Naive thymus-derived CD4-positive, alpha-beta T cell (primary cell): ENCODE measurements at regions of chr12 and their contacts with region 1.

Region 1: GRCh38 chr12:120292661-120293531 is at the start of gene RNU4-1:
- DNase-seq: peak; percentile 51 to 93 (median 89)
- ATAC-seq: peak; percentile 58
- H3K4me3 ChIP-seq: peak within 1 kb of the TSS; percentile 64
- H3K4me3 Mint-ChIP-seq: no peak within 1 kb of the TSS
- H3K27ac ChIP-seq: peak within 1 kb of the TSS; percentile 100
- H3K27ac Mint-ChIP-seq: peak within 1 kb of the TSS in 1 of 9 donors; percentile 62
- H3K4me1 ChIP-seq: no peaks in the 10 kb centered on the region
- H3K4me1 Mint-ChIP-seq: peaks cover 0 to 9% (median 4%) of the 10 kb centered on the region in 7 donors
- H3K27me3 ChIP-seq: no peaks in the 10 kb centered on the region
- H3K27me3 Mint-ChIP-seq: peaks cover 0 to 14% (median 0%) of the 10 kb centered on the region in 5 donors
- total RNA-seq, gene RNU4-1: 319 to 3,107 (median 1,510) TPM

Region 2: GRCh38 chr12:119988782-119989668 is 303.9 kb before region 1 on chr12 and contains the start of gene BICDL1:
- CTCF ChIA-PET with region 1: no interaction called
- POLR2A ChIA-PET with region 1: interaction called, 4 read pairs
- intact Hi-C with region 1: loop called in 1 of 2 experiments (anchors 1 kb)
- DNase-seq: peak; percentile 95 to 99 (median 98)
- ATAC-seq: peak; percentile 93
- H3K4me3 ChIP-seq: peak within 1 kb of the TSS; percentile 68
- H3K4me3 Mint-ChIP-seq: peak within 1 kb of the TSS; percentile 78 to 95 (median 87)
- H3K27ac ChIP-seq: peak within 1 kb of the TSS; percentile 90
- H3K27ac Mint-ChIP-seq: peak within 1 kb of the TSS; percentile 69 to 98 (median 93)
- H3K4me1 ChIP-seq: peaks cover 18 to 19% of the 10 kb centered on the region in 2 donors
- H3K4me1 Mint-ChIP-seq: peaks cover 18 to 46% (median 38%) of the 10 kb centered on the region in 7 donors
- H3K27me3 ChIP-seq: no peaks in the 10 kb centered on the region
- H3K27me3 Mint-ChIP-seq: peaks cover 0 to 9% (median 0%) of the 10 kb centered on the region in 5 donors
- total RNA-seq, gene BICDL1: 75.8 to 156 (median 143) TPM

Region 3: GRCh38 chr12:120194534-120195395 is 98.1 kb before region 1 on chr12 and contains the start of gene GCN1:
- CTCF ChIA-PET with region 1: no interaction called
- POLR2A ChIA-PET with region 1: interaction called, 182 read pairs
- intact Hi-C with region 1: no loop called
- DNase-seq: peak; percentile 77 to 97 (median 89)
- ATAC-seq: peak; percentile 93
- H3K4me3 ChIP-seq: peak within 1 kb of the TSS; percentile 96
- H3K4me3 Mint-ChIP-seq: peak within 1 kb of the TSS; percentile 82 to 96 (median 90)
- H3K27ac ChIP-seq: peak within 1 kb of the TSS; percentile 88
- H3K27ac Mint-ChIP-seq: peak within 1 kb of the TSS; percentile 87 to 95 (median 93)
- H3K4me1 ChIP-seq: peaks cover 20 to 26% of the 10 kb centered on the region in 2 donors
- H3K4me1 Mint-ChIP-seq: peaks cover 27 to 60% (median 44%) of the 10 kb centered on the region in 7 donors
- H3K27me3 ChIP-seq: no peaks in the 10 kb centered on the region
- H3K27me3 Mint-ChIP-seq: no peaks in the 10 kb centered on the region
- total RNA-seq, gene GCN1: 90.6 to 142 (median 132) TPM

Region 4: GRCh38 chr12:120234643-120235368 is 58.1 kb before region 1 on chr12:
- CTCF ChIA-PET with region 1: interaction called, 3 read pairs
- POLR2A ChIA-PET with region 1: interaction called, 156 read pairs
- intact Hi-C with region 1: no loop called
- DNase-seq: no peak
- ATAC-seq: peak; percentile 7
- H3K4me3 ChIP-seq: no peak overlapping the region
- H3K4me3 Mint-ChIP-seq: peak overlapping the region in 2 of 10 donors; percentile 37 to 65
- H3K27ac ChIP-seq: peak overlapping the region; percentile 41
- H3K27ac Mint-ChIP-seq: peak overlapping the region; percentile 4 to 98 (median 92)
- H3K4me1 ChIP-seq: peaks cover 57 to 73% of the 10 kb centered on the region in 2 donors
- H3K4me1 Mint-ChIP-seq: peaks cover 56 to 94% (median 82%) of the 10 kb centered on the region in 7 donors
- H3K27me3 ChIP-seq: no peaks in the 10 kb centered on the region
- H3K27me3 Mint-ChIP-seq: no peaks in the 10 kb centered on the region

Region 5: GRCh38 chr12:120257041-120257821 is 35.7 kb before region 1 on chr12:
- CTCF ChIA-PET with region 1: no interaction called
- POLR2A ChIA-PET with region 1: interaction called, 127 read pairs
- intact Hi-C with region 1: loop called (anchors 1 kb)
- DNase-seq: peak in 1 of 9 donors; percentile 41
- ATAC-seq: no peak
- H3K4me3 ChIP-seq: no peak overlapping the region
- H3K4me3 Mint-ChIP-seq: peak overlapping the region; percentile 23 to 66 (median 46)
- H3K27ac ChIP-seq: peak overlapping the region; percentile 56
- H3K27ac Mint-ChIP-seq: peak overlapping the region; percentile 72 to 97 (median 89)
- H3K4me1 ChIP-seq: peaks cover 79% of the 10 kb centered on the region in 2 donors
- H3K4me1 Mint-ChIP-seq: peaks cover 77 to 98% (median 93%) of the 10 kb centered on the region in 7 donors
- H3K27me3 ChIP-seq: no peaks in the 10 kb centered on the region
- H3K27me3 Mint-ChIP-seq: no peaks in the 10 kb centered on the region

Region 6: DNA sequence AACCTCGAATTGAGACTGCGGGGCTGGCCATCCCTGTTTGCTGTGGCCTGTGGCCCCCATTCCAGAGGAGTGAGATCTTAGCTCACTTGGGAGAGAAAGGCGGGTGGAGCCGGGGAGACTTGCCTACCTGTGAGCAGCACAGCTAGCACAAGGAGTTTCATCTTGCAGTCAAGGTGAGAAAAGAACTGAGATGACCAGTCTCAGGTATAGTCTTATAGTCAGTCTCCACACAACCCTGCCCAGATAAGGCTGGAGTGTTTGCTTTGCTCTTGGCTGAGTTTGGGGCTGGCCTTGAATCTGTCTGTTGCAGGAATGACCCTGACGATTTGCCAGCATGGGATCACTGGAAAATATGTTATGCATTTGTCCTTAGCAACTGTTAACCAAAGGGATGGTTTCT is 34.7 kb after region 1 on chr12 and contains the start of gene PLA2G1B:
- CTCF ChIA-PET with region 1: interaction called, 4 read pairs
- POLR2A ChIA-PET with region 1: interaction called, 19 read pairs
- intact Hi-C with region 1: loop called in 1 of 2 experiments (anchors 2 kb)
- DNase-seq: no peak
- ATAC-seq: no peak
- H3K4me3 ChIP-seq: no peak within 1 kb of the TSS
- H3K4me3 Mint-ChIP-seq: peak within 1 kb of the TSS in 1 of 10 donors; percentile 25
- H3K27ac ChIP-seq: no peak within 1 kb of the TSS
- H3K27ac Mint-ChIP-seq: no peak within 1 kb of the TSS
- H3K4me1 ChIP-seq: no peaks in the 10 kb centered on the region
- H3K4me1 Mint-ChIP-seq: peaks cover 0 to 10% (median 2%) of the 10 kb centered on the region in 7 donors
- H3K27me3 ChIP-seq: no peaks in the 10 kb centered on the region
- H3K27me3 Mint-ChIP-seq: peaks cover 0 to 18% (median 0%) of the 10 kb centered on the region in 5 donors
- total RNA-seq, gene PLA2G1B: 1.5 TPM in 1 of 5 experiments, not detected in the others